ENCODE measurements at regions of chr17 and their contacts with region 1.

Region 1: GRCh38 chr17:31510308-31511194 is 119.1 kb downstream of the RAB11FIP4 start:
- DNase-seq: no peak
- H3K4me3 ChIP-seq: no peak overlapping the region
- H3K27ac ChIP-seq: no peak overlapping the region
- H3K4me1 ChIP-seq: no peaks in the 10 kb centered on the region
- H3K27me3 ChIP-seq: no peaks in the 10 kb centered on the region
- CTCF ChIP-seq: no peak

Region 2: DNA sequence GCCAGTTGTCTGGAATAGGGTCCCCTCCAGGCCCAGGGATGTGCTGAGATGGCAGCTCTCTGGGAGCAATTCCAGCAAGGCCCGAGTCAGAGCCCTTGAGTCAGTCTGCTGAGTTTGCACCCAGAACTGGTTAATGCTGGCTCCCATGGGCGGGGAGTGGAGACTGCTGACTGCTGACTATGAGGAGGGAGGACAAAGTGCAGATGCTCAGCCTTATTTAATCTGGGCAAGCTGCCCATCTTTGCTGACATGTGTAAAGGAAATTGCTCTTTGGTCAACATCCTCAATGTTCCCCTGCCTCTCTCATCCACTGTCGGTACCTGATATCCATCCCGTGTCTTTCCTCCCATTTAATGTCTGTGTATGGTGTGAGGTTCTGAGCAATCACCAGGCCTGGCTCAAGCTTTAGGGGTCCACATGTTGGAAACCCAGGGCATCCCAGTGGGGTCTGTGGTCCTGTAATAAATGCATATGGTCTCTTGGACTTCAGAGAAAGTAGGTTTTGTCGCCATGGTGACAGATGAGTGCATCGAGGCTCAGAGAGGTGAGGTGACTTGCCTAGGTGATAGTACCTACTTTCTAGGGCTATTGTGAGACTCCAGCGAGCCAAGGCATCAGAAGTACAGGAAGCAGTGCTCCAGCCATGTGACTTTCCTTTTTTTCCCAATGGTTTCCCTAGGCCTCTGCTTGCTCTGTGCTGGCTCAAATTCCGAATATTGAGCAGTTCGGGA is 559.7 kb before region 1 on chr17:
- CTCF ChIA-PET with region 1: no interaction called
- POLR2A ChIA-PET with region 1: interaction called, 17 read pairs
- intact Hi-C with region 1: no loop called
- DNase-seq: peak; percentile 11
- H3K4me3 ChIP-seq: no peak overlapping the region
- H3K27ac ChIP-seq: no peak overlapping the region
- H3K4me1 ChIP-seq: no peaks in the 10 kb centered on the region
- H3K27me3 ChIP-seq: no peaks in the 10 kb centered on the region
- CTCF ChIP-seq: no peak

Region 3: DNA sequence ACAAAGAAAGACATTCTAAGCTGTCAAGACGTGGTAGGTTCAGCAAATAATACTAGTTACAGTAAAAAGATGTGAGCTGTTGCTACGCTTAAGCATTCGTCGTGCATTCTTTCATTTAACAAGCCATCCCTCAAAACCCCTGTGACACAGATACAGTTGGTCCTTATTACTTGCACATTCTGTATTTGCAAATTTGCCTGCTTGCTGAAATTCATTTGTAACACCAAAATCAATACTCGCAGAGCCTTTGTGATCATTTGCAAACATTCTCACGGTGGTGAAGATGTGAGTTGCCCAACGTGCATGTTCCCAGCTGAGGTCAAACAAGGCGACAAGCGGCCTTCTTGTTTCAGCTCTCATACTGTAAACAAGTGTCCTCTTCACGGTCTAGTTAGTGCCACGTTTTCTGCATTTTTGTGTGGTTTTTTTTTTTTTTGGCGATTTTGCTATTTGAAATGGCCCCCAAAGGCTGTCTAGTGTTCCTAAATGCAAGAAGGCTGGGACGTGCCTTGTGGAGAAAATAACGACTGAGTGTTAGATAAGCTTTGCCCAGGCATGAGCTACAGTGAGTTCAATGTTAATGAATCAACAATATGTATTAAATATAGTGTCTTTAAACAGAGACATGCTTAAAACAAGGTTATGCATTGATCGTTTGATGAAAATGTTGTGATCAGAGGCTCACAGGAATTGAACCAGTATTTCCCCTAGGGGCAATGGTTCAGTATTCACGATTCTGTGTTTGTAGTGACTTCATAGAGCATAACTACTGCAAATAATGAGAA is 35.0 kb before region 1 on chr17:
- CTCF ChIA-PET with region 1: no interaction called
- POLR2A ChIA-PET with region 1: no interaction called
- intact Hi-C with region 1: no loop called
- DNase-seq: no peak
- H3K4me3 ChIP-seq: no peak overlapping the region
- H3K27ac ChIP-seq: no peak overlapping the region
- H3K4me1 ChIP-seq: no peaks in the 10 kb centered on the region
- H3K27me3 ChIP-seq: no peaks in the 10 kb centered on the region
- CTCF ChIP-seq: no peak

Region 4: GRCh38 chr17:31487648-31488263 is 22.8 kb before region 1 on chr17:
- CTCF ChIA-PET with region 1: no interaction called
- POLR2A ChIA-PET with region 1: no interaction called
- intact Hi-C with region 1: no loop called
- DNase-seq: peak; percentile 71
- H3K4me3 ChIP-seq: peak overlapping the region; percentile 46
- H3K27ac ChIP-seq: no peak overlapping the region
- H3K4me1 ChIP-seq: no peaks in the 10 kb centered on the region
- H3K27me3 ChIP-seq: no peaks in the 10 kb centered on the region
- CTCF ChIP-seq: no peak